WTC11 (cell line): ENCODE measurements at regions of chr2 and their contacts with region 1.

Region 1: DNA sequence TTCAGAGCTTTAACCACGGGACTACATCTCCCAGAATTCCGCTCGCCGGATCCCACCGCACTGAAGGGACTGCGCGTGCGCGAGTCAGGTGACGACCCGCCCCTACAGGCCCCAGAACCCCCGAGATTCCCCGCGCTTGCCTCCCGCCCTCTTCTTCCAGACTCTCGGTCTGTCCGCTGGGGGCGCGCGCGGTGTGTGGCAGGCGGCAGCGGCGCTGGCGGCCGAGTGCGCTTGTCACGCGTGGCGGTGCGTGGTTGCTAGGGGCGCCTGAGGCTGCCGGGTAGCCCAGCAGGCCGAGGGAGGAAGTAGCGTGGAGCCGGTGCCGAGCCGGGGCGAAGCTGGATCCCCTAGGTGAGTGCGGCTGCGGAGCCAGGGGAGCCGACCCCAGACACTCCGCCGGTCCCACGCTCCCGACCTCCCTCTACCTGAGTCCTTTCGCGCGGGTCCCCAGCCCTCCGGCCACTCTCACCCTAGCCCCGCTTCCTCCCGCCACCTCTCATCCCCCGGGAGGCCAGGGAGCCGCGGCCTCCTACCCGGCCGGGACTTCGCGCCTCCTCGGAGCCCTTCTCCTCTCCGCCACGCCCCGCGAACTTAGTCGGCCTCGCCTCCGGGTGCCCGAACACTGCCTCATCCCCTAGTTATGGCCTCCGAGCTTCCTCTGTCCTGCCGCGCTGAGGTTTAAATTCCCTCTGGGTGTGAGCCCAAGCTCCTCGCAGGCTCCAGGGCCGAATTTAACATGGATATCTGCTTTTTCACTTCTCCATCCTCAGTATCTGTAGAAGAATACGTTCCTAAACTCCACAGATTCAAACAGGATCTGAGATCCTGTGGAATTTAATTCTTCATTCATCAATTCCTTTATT is at the start of gene TTLL4:
- DNase-seq: peak; percentile 97
- ATAC-seq: peak; percentile 93
- H3K4me3 Mint-ChIP-seq: peak within 1 kb of the TSS; percentile 98
- H3K27ac Mint-ChIP-seq: peak within 1 kb of the TSS; percentile 56; the same call in 1 of the 2 replicates
- H3K4me1 Mint-ChIP-seq: peaks cover 11% of the 10 kb centered on the region
- H3K27me3 Mint-ChIP-seq: no peaks in the 10 kb centered on the region; the same call in 1 of the 2 replicates
- CTCF ChIP-seq: peak; percentile 28; the same call in 1 of the 2 replicates
- total RNA-seq, gene TTLL4: 73.7 to 87.4 TPM (median 77.1 TPM) in 3 replicates

Region 2: DNA sequence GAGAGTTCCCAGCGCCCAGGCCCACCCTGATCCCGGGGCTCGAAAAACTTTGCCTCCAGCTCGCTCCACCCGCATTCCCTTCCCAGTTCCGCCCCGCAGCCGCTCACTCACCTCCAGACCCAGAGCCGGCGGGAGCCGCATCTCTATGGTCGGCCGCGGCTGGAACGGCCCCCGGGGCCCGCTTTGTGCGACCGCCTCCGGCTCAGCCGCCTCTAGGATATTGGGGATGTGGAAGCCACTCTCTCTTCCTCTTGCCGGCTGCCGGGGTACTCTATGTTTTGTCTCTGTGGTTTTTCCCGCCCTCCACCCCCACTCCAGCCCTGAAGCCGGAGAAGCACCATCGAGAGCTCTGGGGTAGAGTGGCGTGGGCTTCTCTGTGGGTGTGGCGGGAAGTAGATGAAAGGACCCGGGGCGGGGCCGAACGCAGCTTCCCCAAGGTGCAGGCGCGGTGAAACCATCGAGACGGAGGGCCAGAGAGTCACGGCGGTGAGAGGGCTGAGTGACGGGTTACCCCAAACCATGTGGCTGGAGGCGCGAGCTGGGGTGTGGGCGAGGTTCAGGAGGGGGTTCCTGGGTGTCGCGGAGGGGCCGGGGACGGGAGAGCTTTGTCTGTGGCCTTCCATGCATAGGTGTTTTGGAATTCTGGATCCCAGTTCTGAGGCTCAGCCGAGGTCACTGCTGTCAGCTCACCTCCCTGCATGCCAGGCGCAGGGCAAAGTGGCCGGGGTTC is 51.5 kb before region 1 on chr2 and contains the starts of genes BCS1L and ZNF142:
- CTCF ChIA-PET with region 1: interaction called, 15 read pairs
- POLR2A ChIA-PET with region 1: interaction called, 7 read pairs
- DNase-seq: peak; percentile 96
- ATAC-seq: peak; percentile 91
- H3K4me3 Mint-ChIP-seq: peak within 1 kb of the TSS; percentile 93
- H3K27ac Mint-ChIP-seq: peak within 1 kb of the TSS; percentile 90
- H3K4me1 Mint-ChIP-seq: peaks cover 9% of the 10 kb centered on the region
- H3K27me3 Mint-ChIP-seq: no peaks in the 10 kb centered on the region
- CTCF ChIP-seq: no peak
- total RNA-seq, gene BCS1L: 31.4 to 35.4 TPM (median 32.7 TPM) in 3 replicates
- total RNA-seq, gene ZNF142: 25.1 to 33.5 TPM (median 28.7 TPM) in 3 replicates

Region 3: DNA sequence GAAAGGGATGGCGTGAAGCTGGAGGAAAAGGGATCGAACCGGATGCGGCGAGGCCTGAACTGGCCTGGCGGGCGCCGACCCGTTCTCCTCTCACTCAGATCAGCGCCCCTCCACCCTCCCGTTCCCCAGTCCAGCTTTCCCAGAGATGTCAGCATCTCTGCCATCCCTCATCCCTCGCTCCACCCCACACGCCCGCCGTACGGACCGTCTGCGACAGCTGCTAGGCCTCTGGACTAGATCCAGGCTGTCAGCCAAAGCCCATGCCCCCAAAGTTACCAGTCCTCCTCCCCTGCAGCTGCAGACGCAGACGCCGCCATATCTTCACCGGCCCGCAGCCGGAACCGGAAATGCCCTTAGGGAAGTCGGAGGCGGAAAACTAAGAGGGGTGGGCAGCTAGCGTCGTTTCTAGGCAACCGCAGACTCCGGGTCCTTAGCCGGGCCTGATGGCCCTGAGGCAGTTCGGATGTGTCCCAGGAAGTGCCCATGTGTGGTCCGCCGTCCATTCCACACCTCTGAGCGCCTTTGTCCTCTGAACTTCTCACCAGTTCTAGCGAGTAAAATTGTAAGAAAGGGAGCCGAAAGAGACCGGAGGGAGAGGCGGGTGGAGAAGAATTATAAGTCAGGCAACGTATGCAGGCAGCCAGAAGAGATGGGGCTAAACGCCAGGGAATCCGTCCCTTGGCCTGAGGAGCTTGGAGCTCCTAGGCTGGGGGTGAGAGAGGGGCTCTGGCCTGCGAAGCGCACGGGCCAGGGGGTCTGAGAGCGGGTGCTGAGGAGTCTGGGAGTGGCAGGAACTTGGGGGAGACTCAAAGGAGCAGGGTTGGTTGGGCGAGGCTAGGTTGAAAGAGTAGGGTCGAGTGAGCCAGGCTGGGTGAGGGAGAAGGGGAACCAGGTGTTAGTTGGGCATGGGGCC is 39.0 kb before region 1 on chr2 and contains the starts of genes RNF25 and STK36:
- CTCF ChIA-PET with region 1: interaction called, 14 read pairs
- POLR2A ChIA-PET with region 1: no interaction called
- DNase-seq: peak; percentile 85
- ATAC-seq: peak; percentile 96
- H3K4me3 Mint-ChIP-seq: peak within 1 kb of the TSS; percentile 98
- H3K27ac Mint-ChIP-seq: peak within 1 kb of the TSS; percentile 93
- H3K4me1 Mint-ChIP-seq: peaks cover 13% of the 10 kb centered on the region
- H3K27me3 Mint-ChIP-seq: no peaks in the 10 kb centered on the region
- CTCF ChIP-seq: no peak
- total RNA-seq, gene RNF25: 20.3 to 25.1 TPM (median 23.9 TPM) in 3 replicates
- total RNA-seq, gene STK36: 41.0 to 47.7 TPM (median 42.7 TPM) in 3 replicates

Region 4: GRCh38 chr2:218727502-218728165 is 16.7 kb after region 1 on chr2:
- CTCF ChIA-PET with region 1: interaction called, 30 read pairs
- POLR2A ChIA-PET with region 1: no interaction called
- DNase-seq: no peak
- ATAC-seq: no peak
- H3K4me3 Mint-ChIP-seq: no peak overlapping the region
- H3K27ac Mint-ChIP-seq: no peak overlapping the region
- H3K4me1 Mint-ChIP-seq: peaks cover 22% of the 10 kb centered on the region
- H3K27me3 Mint-ChIP-seq: no peaks in the 10 kb centered on the region
- CTCF ChIP-seq: no peak

Region 5: DNA sequence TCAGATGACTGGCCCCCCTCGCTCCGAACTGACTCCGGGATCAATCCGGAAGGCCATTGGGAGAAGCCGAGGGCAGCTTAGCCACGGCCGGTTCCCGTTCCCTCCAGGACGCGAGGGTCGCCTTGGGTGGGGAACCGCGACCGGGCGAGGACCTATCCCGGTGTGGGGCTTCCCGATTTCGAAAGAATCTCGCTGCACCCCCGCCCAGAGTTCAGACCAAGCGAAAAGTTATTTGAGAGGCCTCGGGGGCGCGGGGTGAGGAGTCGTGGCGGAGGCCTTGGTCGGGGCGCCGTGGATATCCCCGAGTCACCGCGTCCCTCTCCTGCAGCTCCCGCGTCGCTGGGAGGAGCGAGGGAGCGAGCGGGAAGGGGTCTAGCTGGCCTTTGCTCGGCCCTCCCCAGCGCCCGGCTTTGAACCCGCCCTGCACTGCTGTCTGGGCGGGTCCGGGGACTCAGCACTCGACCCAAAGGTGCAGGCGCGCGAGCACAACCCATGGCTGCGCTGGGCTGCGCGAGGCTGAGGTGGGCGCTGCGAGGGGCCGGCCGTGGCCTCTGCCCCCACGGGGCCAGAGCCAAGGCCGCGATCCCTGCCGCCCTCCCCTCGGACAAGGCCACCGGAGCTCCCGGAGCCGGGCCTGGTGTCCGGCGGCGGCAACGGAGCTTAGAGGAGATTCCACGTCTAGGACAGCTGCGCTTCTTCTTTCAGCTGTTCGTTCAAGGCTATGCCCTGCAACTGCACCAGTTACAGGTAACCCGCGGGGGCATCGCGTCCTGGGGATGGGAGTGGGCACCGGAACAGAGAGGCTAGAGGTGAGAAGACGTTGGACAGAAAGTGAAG is 71.0 kb after region 1 on chr2 and contains the start of gene CYP27A1:
- CTCF ChIA-PET with region 1: interaction called, 12 read pairs
- POLR2A ChIA-PET with region 1: no interaction called
- DNase-seq: peak; percentile 44
- ATAC-seq: peak; percentile 87
- H3K4me3 Mint-ChIP-seq: peak within 1 kb of the TSS; percentile 86
- H3K27ac Mint-ChIP-seq: no peak within 1 kb of the TSS
- H3K4me1 Mint-ChIP-seq: peaks cover 17% of the 10 kb centered on the region
- H3K27me3 Mint-ChIP-seq: peaks cover 58% of the 10 kb centered on the region
- CTCF ChIP-seq: no peak
- total RNA-seq, gene CYP27A1: 5.6 to 9.3 TPM (median 8.1 TPM) in 3 replicates

Region 6: DNA sequence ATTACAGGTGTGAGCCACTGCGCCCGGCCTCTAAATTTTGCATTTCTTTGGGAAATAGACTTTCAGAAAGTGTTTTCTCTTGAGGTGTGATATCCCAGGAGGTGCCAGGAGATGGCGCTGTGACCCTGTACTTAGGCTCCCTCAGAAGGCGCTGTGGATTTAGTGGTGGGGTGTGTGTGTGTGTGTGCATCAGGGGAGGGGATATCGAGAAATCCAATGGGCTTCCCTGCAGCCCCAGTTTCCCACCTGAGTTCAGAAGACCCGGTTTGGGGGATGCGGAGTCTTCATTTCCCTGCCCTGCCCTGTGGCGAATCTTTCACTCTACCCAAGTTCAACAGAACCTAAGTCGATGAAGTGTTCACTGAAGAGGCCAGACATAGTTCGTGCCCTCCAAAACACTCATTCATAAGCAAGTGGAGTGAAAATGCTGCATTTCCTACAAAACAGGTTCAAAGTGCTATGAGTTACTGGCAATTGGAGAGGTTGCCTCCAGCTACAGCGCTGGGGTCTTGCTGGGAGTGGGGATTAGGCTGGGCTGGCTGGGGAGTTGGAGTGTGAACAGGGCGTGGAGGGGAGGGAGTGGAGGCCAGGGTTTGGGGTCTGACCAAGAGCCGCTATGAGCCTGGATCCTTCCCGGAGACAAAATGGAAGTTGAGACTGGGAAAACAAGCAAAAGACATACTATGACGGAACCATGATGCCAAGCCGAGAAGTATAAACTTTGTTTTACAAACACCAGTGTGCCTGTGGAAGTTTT is 142.2 kb after region 1 on chr2:
- CTCF ChIA-PET with region 1: interaction called, 13 read pairs
- POLR2A ChIA-PET with region 1: no interaction called
- DNase-seq: peak; percentile 83
- ATAC-seq: peak; percentile 80
- H3K4me3 Mint-ChIP-seq: no peak overlapping the region
- H3K27ac Mint-ChIP-seq: no peak overlapping the region
- H3K4me1 Mint-ChIP-seq: peaks cover 37% of the 10 kb centered on the region
- H3K27me3 Mint-ChIP-seq: peaks cover 60% of the 10 kb centered on the region
- CTCF ChIP-seq: peak; percentile 87